Endothelial cell of umbilical vein (primary cell): ENCODE measurements at regions of chrX and their contacts with region 1.

Region 1: GRCh38 chrX:18984381-18985185 is 669 bp upstream of the PHKA2 start:
- DNase-seq: peak; percentile 70
- H3K4me3 ChIP-seq: peak overlapping the region; percentile 61 to 84 (median 84)
- H3K27ac ChIP-seq: peak overlapping the region; percentile 75
- H3K4me1 ChIP-seq: peaks cover 16% of the 10 kb centered on the region
- H3K27me3 ChIP-seq: no peaks in the 10 kb centered on the region
- CTCF ChIP-seq: peak in 1 of 2 donors; percentile 28
- POLR2A ChIP-seq: peak; percentile 45

Region 2: GRCh38 chrX:17736856-17737706 is 1247.5 kb before region 1 on chrX and contains the start of gene SCML1:
- CTCF ChIA-PET with region 1: no interaction called
- POLR2A ChIA-PET with region 1: no interaction called
- dilution Hi-C with region 1: no loop called
- intact Hi-C with region 1: loop called (anchors 5 kb)
- DNase-seq: peak; percentile 97
- H3K4me3 ChIP-seq: peak within 1 kb of the TSS; percentile 61 to 88 (median 63)
- H3K27ac ChIP-seq: peak within 1 kb of the TSS; percentile 77
- H3K4me1 ChIP-seq: no peaks in the 10 kb centered on the region
- H3K27me3 ChIP-seq: no peaks in the 10 kb centered on the region
- CTCF ChIP-seq: no peak
- POLR2A ChIP-seq: no peak
- total RNA-seq, gene SCML1: 10.1 and 12.4 TPM in 2 replicates

Region 3: DNA sequence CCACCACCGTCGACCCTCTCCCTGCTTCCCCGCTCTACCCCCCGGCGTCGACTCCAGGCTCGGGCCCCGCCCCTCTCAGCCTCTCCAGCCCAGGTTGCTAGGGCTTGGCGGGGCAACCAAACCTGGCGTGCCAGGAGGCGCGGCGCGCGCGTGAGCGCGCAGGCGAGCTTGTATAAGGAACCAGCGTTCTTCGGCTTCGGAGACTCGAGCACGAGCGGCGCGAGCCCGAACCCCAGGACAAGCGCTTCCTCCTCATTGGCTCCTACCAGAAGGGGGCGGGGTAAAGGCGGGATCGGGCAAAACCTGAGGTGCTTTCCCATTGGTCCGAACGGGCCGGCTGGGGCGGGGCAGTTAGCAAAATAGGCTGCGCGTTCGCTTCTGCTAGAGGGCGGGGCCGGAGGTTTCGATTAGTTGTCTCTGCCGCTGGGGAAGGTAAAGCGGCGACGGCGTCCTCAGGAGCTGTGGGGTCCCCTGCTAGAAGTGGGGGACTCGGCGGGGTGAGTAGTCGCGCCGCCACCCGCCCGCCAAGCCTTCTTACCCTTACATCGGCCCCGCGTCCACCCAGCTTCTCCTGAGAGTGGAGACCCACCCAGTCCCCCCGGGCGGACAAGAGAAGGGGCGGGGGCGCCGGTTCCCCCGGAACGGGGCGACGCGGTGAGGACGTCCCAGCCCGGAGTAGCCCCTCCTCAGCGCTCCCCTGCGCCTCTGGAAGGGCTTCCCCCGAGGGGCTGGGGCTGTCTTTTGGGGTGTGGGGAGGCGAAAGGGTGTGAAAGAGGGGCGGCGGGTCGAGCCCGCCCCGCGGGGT is 559.2 kb before region 1 on chrX and contains the start of gene CDKL5:
- CTCF ChIA-PET with region 1: no interaction called
- POLR2A ChIA-PET with region 1: no interaction called
- dilution Hi-C with region 1: no loop called
- intact Hi-C with region 1: loop called (anchors 1 kb)
- DNase-seq: peak; percentile 94
- H3K4me3 ChIP-seq: peak within 1 kb of the TSS; percentile 70 to 81 (median 79)
- H3K27ac ChIP-seq: no peak within 1 kb of the TSS
- H3K4me1 ChIP-seq: no peaks in the 10 kb centered on the region
- H3K27me3 ChIP-seq: peaks cover 0 to 2% of the 10 kb centered on the region in 2 experiments
- CTCF ChIP-seq: no peak
- POLR2A ChIP-seq: no peak
- total RNA-seq, gene CDKL5: 4.2 and 4.3 TPM in 2 replicates

Region 4: DNA sequence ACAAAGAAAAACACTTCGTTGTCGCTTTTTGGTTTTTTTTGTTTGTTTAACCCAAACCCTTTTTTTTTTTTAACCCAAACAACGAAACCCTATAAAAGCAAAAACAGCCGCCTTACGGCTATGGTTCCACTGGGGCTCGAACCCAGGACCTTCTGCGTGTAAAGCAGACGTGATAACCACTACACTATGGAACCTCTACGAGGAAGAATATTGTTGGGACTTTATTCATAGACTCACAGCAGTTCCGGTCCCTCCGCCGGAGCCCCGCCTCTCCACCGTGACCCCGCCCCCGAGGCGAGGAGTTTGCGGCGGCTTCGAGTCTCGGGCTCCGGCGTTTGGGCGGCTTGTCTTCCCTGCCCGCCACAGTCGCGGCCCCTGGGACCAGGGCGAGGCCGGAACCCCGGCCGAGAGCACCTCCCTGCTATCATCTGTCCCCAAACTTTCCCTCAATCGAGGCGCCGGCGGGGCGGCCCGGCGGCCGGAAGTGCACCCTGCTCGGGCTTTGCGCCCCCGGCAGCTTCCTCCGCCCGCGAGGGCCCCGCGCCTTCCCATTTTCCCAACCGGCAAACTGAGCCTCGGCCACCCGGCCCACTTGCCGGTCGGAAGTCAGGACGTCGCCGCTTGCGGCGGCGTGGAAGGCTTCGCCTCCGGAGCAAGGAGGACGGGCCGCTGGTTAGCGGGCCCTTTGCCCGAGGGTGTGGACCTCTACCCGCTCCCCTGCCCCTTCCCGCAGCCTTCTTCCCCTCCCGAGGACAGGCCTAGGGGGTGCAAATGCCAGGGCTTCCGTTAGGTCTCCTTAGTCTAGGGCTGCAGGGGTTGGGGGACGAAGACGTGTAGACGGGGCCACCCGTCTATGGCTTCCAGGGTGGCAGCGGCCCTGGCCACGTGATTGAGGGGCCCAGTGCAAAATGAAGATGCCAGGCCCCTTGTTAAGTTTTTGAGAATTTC is 309.5 kb before region 1 on chrX:
- CTCF ChIA-PET with region 1: no interaction called
- POLR2A ChIA-PET with region 1: no interaction called
- dilution Hi-C with region 1: no loop called
- intact Hi-C with region 1: loop called (anchors 5 kb)
- DNase-seq: peak; percentile 80
- H3K4me3 ChIP-seq: peak overlapping the region; percentile 63 to 76 (median 70)
- H3K27ac ChIP-seq: peak overlapping the region; percentile 60
- H3K4me1 ChIP-seq: no peaks in the 10 kb centered on the region
- H3K27me3 ChIP-seq: no peaks in the 10 kb centered on the region
- CTCF ChIP-seq: no peak
- POLR2A ChIP-seq: no peak

Region 5: GRCh38 chrX:18702362-18703195 is 282.0 kb before region 1 on chrX:
- CTCF ChIA-PET with region 1: no interaction called
- POLR2A ChIA-PET with region 1: no interaction called
- dilution Hi-C with region 1: no loop called
- intact Hi-C with region 1: no loop called
- DNase-seq: peak; percentile 67
- H3K4me3 ChIP-seq: no peak overlapping the region
- H3K27ac ChIP-seq: peak overlapping the region; percentile 24
- H3K4me1 ChIP-seq: peaks cover 14% of the 10 kb centered on the region
- H3K27me3 ChIP-seq: peaks cover 0 to 2% of the 10 kb centered on the region in 2 experiments
- CTCF ChIP-seq: no peak
- POLR2A ChIP-seq: no peak

Region 6: DNA sequence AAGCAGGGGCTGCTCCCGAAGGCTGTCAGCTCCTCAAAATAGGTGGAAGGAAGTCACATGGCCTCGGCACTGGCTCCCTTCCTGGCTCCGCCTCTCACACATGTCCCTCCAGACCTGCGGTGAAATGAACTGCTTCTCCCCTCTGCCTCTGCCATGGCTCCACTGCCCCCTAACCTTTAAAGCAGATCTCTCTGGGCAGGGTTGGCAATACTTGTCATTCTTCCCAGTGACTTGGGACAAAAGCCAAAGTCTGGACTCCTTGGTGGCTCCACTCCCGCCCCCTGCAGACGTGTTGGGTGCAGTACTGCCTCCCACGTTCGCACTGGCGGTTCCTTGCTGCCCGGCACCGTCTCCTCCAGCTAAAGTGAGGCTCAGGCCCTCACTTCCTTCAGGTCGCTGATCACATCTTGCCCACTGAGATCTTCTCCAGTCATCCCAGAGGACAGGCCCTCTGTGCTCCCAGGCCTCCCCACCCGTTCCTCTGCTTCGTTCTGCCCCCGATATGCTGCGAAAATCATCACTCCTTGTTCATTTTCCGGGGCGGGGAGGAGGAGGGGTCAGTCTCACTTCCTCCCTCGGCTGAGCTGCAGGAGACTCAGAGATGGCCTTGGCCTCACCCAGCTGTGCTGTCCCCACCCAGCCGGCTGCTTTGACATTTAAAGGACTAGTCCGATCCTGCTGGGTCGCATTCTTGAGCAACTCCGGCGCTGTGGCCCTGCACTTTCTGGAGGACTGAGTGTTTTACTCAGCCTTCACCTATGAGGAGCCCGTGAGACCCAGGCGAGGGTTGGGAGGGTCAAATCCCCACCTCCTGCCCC is 98.0 kb before region 1 on chrX:
- CTCF ChIA-PET with region 1: no interaction called
- POLR2A ChIA-PET with region 1: no interaction called
- dilution Hi-C with region 1: no loop called
- intact Hi-C with region 1: loop called (anchors 5 kb)
- DNase-seq: peak; percentile 59
- H3K4me3 ChIP-seq: peak overlapping the region in 1 of 3 experiments; percentile 21
- H3K27ac ChIP-seq: no peak overlapping the region
- H3K4me1 ChIP-seq: peaks cover 12% of the 10 kb centered on the region
- H3K27me3 ChIP-seq: no peaks in the 10 kb centered on the region
- CTCF ChIP-seq: peak; percentile 43 to 66
- POLR2A ChIP-seq: no peak

Region 7: DNA sequence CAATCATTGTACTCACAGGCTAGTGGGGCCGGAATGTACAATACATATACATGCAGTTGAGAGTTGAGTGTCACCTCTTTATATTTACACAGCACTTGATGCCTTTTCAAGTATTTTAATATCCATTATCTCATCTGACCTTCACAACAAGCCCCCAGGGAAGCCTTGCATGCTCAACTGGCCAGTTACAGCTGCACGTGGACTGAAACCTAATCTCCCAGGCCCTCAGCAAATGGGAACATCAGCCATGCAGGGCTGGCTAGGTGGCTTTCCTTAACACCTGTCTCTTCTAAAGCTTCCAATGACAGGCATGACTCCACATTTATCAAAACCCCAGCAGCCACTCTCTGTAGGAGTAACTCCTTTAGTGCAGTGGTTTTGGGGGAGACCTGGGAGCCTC is 57.1 kb before region 1 on chrX:
- CTCF ChIA-PET with region 1: no interaction called
- POLR2A ChIA-PET with region 1: no interaction called
- dilution Hi-C with region 1: no loop called
- intact Hi-C with region 1: no loop called
- DNase-seq: no peak
- H3K4me3 ChIP-seq: no peak overlapping the region
- H3K27ac ChIP-seq: no peak overlapping the region
- H3K4me1 ChIP-seq: no peaks in the 10 kb centered on the region
- H3K27me3 ChIP-seq: no peaks in the 10 kb centered on the region
- CTCF ChIP-seq: no peak
- POLR2A ChIP-seq: no peak

Region 8: DNA sequence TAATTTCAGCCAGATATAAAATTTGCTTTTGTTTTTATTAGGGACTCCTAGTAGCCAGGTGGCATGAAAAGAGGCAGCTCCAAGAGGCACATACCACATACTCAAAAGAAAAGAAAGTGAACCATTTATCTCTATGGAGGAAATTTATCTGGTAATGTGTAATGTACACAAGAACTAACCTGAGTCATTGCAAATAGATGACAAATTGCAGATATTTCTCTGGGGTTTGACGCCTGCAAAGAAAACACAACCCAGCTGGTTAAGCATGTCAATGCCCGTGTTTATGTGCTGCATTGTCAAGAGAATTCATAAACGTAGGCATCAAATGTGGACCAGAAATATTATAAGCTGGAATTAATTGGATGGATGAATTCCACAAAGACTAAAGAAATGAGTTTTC is 46.2 kb after region 1 on chrX:
- CTCF ChIA-PET with region 1: no interaction called
- POLR2A ChIA-PET with region 1: no interaction called
- dilution Hi-C with region 1: no loop called
- intact Hi-C with region 1: no loop called
- DNase-seq: no peak
- H3K4me3 ChIP-seq: no peak overlapping the region
- H3K27ac ChIP-seq: no peak overlapping the region
- H3K4me1 ChIP-seq: no peaks in the 10 kb centered on the region
- H3K27me3 ChIP-seq: no peaks in the 10 kb centered on the region
- CTCF ChIP-seq: no peak
- POLR2A ChIP-seq: no peak

Region 9: GRCh38 chrX:19343535-19344408 is 359.2 kb after region 1 on chrX and contains the start of gene PDHA1:
- CTCF ChIA-PET with region 1: no interaction called
- POLR2A ChIA-PET with region 1: no interaction called
- dilution Hi-C with region 1: no loop called
- intact Hi-C with region 1: loop called (anchors 5 kb)
- DNase-seq: peak; percentile 92
- H3K4me3 ChIP-seq: peak within 1 kb of the TSS; percentile 66 to 90 (median 87)
- H3K27ac ChIP-seq: peak within 1 kb of the TSS; percentile 13
- H3K4me1 ChIP-seq: peaks cover 11% of the 10 kb centered on the region
- H3K27me3 ChIP-seq: no peaks in the 10 kb centered on the region
- CTCF ChIP-seq: no peak
- POLR2A ChIP-seq: peak; percentile 73
- total RNA-seq, gene PDHA1: 138 and 162 TPM in 2 replicates